WTC11 (cell line): ENCODE measurements at regions of chr3 and their contacts with region 1.

Region 1: GRCh38 chr3:194315088-194315964 is 35.8 kb downstream of the CPN2 start:
- DNase-seq: peak; percentile 93
- ATAC-seq: peak; percentile 85
- H3K4me3 Mint-ChIP-seq: peak overlapping the region; percentile 72
- H3K27ac Mint-ChIP-seq: no peak overlapping the region
- H3K4me1 Mint-ChIP-seq: peaks cover 35% of the 10 kb centered on the region
- H3K27me3 Mint-ChIP-seq: peaks cover 48% of the 10 kb centered on the region
- CTCF ChIP-seq: peak; percentile 93

Region 2: DNA sequence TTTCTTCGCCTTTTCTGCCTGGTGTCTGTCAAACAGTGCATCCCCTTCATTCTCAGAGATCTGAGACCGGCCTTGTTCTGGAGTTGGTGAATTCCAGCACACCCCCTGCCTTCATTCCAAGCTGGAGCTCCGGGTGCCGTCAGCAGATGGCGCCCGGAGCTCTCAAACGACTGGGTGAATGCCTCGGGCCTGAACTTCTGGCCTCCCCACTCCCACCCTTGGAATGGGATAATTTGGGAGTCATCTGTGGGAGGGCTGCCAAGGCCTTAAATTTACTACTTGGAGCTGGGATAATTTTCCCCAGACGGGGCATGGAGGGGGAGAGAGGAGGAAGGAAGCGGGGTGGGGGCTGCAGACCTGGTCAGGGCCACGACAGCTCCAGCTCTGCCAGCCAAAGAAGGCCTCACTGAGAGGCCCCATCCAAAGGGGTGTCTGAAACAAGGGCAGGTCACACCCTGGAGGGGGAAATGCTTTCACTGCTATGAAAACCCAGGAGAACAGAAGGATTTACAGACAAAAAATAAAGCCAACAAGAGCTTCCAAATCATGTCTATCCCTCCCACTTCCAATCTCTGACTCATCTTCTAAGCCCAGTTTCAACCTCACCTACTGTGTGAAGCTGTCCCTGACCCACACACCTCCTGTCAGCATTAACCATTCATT is 534.4 kb before region 1 on chr3:
- CTCF ChIA-PET with region 1: interaction called, 56 read pairs
- POLR2A ChIA-PET with region 1: no interaction called
- DNase-seq: peak; percentile 72
- ATAC-seq: peak; percentile 74
- H3K4me3 Mint-ChIP-seq: no peak overlapping the region
- H3K27ac Mint-ChIP-seq: no peak overlapping the region
- H3K4me1 Mint-ChIP-seq: peaks cover 62% of the 10 kb centered on the region
- H3K27me3 Mint-ChIP-seq: peaks cover 34% of the 10 kb centered on the region
- CTCF ChIP-seq: peak; percentile 63

Region 3: GRCh38 chr3:194134757-194135528 is 180.4 kb before region 1 on chr3:
- CTCF ChIA-PET with region 1: interaction called, 48 read pairs
- POLR2A ChIA-PET with region 1: interaction called, 8 read pairs
- DNase-seq: peak; percentile 95
- ATAC-seq: peak; percentile 36
- H3K4me3 Mint-ChIP-seq: peak overlapping the region; percentile 92
- H3K27ac Mint-ChIP-seq: peak overlapping the region; percentile 89
- H3K4me1 Mint-ChIP-seq: peaks cover 57% of the 10 kb centered on the region
- H3K27me3 Mint-ChIP-seq: peaks cover 18% of the 10 kb centered on the region
- CTCF ChIP-seq: no peak

Region 4: DNA sequence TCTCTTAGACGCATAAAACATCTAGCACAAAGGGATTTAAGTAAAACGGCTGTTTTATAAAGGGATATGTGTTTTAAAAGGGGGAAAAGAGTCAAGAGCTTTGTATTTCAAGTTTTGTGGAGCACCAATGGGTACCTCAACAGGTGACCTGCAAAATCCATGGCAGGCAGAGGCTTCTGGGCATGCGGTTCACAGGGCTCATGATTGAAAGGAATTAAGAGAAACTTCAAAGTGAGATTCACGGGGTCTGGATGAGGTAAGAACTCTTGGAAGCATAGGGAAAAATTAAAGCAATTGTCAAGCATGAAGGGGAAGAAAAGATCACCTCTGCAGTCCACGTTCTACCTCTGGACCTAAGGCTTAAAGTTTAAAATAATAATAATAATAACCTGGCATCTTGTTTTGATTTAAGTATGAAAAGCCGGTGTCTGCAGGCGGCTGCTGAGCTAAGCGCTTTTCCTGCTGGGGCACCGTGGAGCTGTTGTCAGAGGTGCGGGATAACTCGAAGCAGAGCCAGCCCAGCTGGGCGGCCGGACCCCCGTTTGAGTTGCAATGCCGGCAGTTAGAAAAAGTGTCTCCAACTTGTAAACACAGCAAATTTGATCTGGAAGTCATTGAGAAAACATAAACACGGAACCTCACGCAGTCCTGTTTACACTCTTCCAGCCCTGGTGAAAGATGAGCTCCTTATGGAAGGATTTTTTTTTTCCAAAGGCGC is 138.9 kb before region 1 on chr3:
- CTCF ChIA-PET with region 1: interaction called, 14 read pairs
- POLR2A ChIA-PET with region 1: no interaction called
- DNase-seq: peak; percentile 45
- ATAC-seq: peak; percentile 68
- H3K4me3 Mint-ChIP-seq: peak overlapping the region; percentile 40
- H3K27ac Mint-ChIP-seq: peak overlapping the region; percentile 25; the same call in 1 of the 2 replicates
- H3K4me1 Mint-ChIP-seq: peaks cover 34% of the 10 kb centered on the region
- H3K27me3 Mint-ChIP-seq: no peaks in the 10 kb centered on the region; the same call in none of the 2 replicates
- CTCF ChIP-seq: no peak

Region 5: GRCh38 chr3:194245975-194246561 is 69.3 kb before region 1 on chr3:
- CTCF ChIA-PET with region 1: interaction called, 13 read pairs
- POLR2A ChIA-PET with region 1: no interaction called
- DNase-seq: peak; percentile 43
- ATAC-seq: peak; percentile 89
- H3K4me3 Mint-ChIP-seq: no peak overlapping the region
- H3K27ac Mint-ChIP-seq: 0 out of 2 replicates have a peak overlapping the region, but pooled peaks have one; percentile 15
- H3K4me1 Mint-ChIP-seq: peaks cover 32% of the 10 kb centered on the region
- H3K27me3 Mint-ChIP-seq: no peaks in the 10 kb centered on the region
- CTCF ChIP-seq: no peak

Region 6: GRCh38 chr3:194285024-194285849 is 30.1 kb before region 1 on chr3:
- CTCF ChIA-PET with region 1: interaction called, 38 read pairs
- POLR2A ChIA-PET with region 1: no interaction called
- DNase-seq: peak; percentile 4
- ATAC-seq: no peak
- H3K4me3 Mint-ChIP-seq: no peak overlapping the region
- H3K27ac Mint-ChIP-seq: no peak overlapping the region
- H3K4me1 Mint-ChIP-seq: 0 out of 2 replicates have a peak, but pooled peaks cover 3% of the 10 kb centered on the region
- H3K27me3 Mint-ChIP-seq: peaks cover 7% of the 10 kb centered on the region
- CTCF ChIP-seq: no peak

Region 7: GRCh38 chr3:194344012-194344411 is 28.7 kb after region 1 on chr3:
- CTCF ChIA-PET with region 1: interaction called, 18 read pairs
- POLR2A ChIA-PET with region 1: no interaction called
- DNase-seq: peak; percentile 90
- ATAC-seq: peak; percentile 42
- H3K4me3 Mint-ChIP-seq: no peak overlapping the region
- H3K27ac Mint-ChIP-seq: no peak overlapping the region
- H3K4me1 Mint-ChIP-seq: peaks cover 25% of the 10 kb centered on the region
- H3K27me3 Mint-ChIP-seq: peaks cover 31% of the 10 kb centered on the region
- CTCF ChIP-seq: peak; percentile 88

Region 8: GRCh38 chr3:194598771-194599557 is 283.6 kb after region 1 on chr3:
- CTCF ChIA-PET with region 1: no interaction called
- POLR2A ChIA-PET with region 1: no interaction called
- DNase-seq: no peak
- ATAC-seq: no peak
- H3K4me3 Mint-ChIP-seq: no peak overlapping the region
- H3K27ac Mint-ChIP-seq: no peak overlapping the region
- H3K4me1 Mint-ChIP-seq: no peaks in the 10 kb centered on the region
- H3K27me3 Mint-ChIP-seq: no peaks in the 10 kb centered on the region
- CTCF ChIP-seq: no peak